GM12878 (cell line): ENCODE measurements at regions of chr2 and their contacts with region 1.

Region 1: DNA sequence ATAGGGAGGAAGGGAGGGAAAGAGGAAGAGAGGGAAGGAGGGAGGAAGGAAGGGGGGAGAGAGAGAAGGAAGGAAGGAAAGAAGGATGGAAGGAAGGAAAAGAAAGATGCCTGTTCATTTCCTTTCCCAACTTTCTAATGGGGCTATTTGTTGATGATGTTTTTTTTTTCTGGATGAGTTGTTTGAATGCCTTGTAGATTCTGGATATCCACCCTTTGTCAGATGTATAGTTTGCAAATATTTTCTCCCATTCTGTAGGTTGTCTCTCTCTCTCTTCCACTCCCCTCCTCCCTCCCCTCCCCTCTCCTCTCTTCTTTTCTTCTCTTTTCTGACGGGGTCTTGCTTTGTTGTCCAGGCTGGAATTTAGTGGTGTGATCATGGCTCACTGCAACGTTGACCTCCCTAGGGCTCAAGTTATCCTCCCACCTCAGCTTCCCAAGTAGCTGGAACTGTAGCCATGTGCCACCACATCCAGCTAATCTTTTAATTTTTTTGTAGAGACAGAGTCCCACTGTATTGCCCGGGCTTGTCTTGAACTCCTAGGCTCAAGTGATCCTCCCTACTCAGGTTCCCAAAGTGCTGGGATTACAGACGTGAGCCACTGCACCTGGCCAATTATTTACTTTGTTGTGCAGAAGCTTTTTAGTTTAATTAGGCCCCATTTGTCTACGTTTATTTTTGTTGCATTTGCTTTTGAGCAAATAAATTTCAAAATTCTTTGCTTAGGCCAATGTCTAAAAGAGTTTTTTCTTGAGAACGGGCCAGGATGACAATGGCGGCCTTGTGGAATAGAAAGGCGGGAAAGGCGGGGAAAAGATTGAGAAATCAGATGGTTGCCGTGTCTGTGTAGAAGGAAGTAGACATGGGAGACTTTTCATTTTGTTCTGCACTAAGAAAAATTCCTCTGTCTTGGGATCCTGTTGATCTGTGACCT is 57.3 kb upstream of the FAM117B start:
- DNase-seq: no peak
- ATAC-seq: no peak
- H3K4me3 ChIP-seq: no peak overlapping the region
- H3K27ac ChIP-seq: no peak overlapping the region
- H3K4me1 ChIP-seq: no peaks in the 10 kb centered on the region
- H3K27me3 ChIP-seq: no peaks in the 10 kb centered on the region
- CTCF ChIP-seq: no peak
- EP300 ChIP-seq: no peak
- POLR2A ChIP-seq: no peak
- RAD21 ChIP-seq: no peak

Region 2: DNA sequence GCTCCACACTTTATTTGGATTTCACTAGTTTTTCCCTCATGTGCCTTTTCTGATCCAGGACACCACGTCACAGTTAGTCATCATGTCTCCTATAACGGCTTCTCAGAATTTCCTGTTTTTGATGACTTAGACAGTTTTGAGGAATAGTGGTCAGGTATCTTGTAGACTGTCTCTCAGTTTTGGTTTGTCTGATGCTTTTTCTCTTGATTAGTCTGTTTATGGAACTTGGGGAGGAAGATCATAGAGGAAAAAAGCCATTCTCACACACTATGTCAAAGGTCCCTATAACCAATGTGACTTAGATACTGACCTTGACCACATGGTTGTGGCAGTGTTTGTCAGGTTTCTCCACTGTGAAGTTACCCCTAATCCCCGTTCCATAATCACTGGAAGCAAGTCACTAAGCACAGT is 868.6 kb after region 1 on chr2:
- CTCF ChIA-PET with region 1: no interaction called
- POLR2A ChIA-PET with region 1: no interaction called
- RAD21 ChIA-PET with region 1: no interaction called
- SMC1A ChIA-PET with region 1: no interaction called
- in situ Hi-C with region 1: loop called (anchors 10 kb)
- intact Hi-C with region 1: no loop called
- DNase-seq: no peak
- ATAC-seq: no peak
- H3K4me3 ChIP-seq: no peak overlapping the region
- H3K27ac ChIP-seq: no peak overlapping the region
- H3K4me1 ChIP-seq: no peaks in the 10 kb centered on the region
- H3K27me3 ChIP-seq: no peaks in the 10 kb centered on the region
- CTCF ChIP-seq: no peak
- EP300 ChIP-seq: no peak
- POLR2A ChIP-seq: no peak
- RAD21 ChIP-seq: no peak

Region 3: DNA sequence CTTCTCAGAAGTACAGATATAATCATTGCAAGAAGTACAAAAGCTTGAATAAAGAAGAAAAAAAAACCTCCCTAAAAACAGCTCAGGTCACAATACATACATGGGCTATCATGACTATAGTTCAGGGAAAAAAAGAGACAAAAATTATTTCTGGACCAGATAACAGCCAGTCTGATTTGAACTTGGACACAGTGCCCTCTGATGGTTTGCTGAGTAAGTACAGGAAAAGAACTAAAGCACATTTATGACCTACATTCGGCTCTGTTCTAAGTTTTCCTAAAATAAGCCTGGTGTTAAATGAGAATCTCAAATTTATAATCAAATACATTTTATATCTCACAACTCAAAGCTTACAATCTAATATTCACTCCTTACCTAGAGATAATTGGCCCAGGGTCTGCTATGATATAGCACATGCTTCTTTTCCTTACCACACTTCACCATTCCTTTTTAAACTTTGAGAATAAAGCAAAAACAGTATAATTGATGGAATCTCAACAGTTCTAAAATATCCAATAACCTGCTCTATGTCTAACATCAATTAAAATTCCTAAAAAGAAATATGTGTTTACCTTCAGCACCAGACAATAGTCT is 876.4 kb after region 1 on chr2:
- CTCF ChIA-PET with region 1: interaction called, 4 read pairs
- POLR2A ChIA-PET with region 1: interaction called, 8 read pairs
- RAD21 ChIA-PET with region 1: interaction called, 5 read pairs
- SMC1A ChIA-PET with region 1: interaction called, 3 read pairs
- in situ Hi-C with region 1: loop called (anchors 10 kb)
- intact Hi-C with region 1: loop called (anchors 2 kb)
- DNase-seq: peak; percentile 4
- ATAC-seq: peak; percentile 86
- H3K4me3 ChIP-seq: no peak overlapping the region
- H3K27ac ChIP-seq: no peak overlapping the region
- H3K4me1 ChIP-seq: no peaks in the 10 kb centered on the region
- H3K27me3 ChIP-seq: no peaks in the 10 kb centered on the region
- CTCF ChIP-seq: peak; percentile 67 to 80 (median 73); a peak in 5 of 6 replicates
- EP300 ChIP-seq: no peak
- POLR2A ChIP-seq: no peak
- RAD21 ChIP-seq: peak; percentile 89

Region 4: GRCh38 chr2:203814661-203815540 is 1237.4 kb after region 1 on chr2:
- CTCF ChIA-PET with region 1: no interaction called
- POLR2A ChIA-PET with region 1: no interaction called
- RAD21 ChIA-PET with region 1: no interaction called
- SMC1A ChIA-PET with region 1: no interaction called
- in situ Hi-C with region 1: loop called (anchors 25 kb)
- intact Hi-C with region 1: loop called (anchors 5 kb)
- DNase-seq: no peak
- ATAC-seq: peak; percentile 91
- H3K4me3 ChIP-seq: no peak overlapping the region
- H3K27ac ChIP-seq: no peak overlapping the region
- H3K4me1 ChIP-seq: peaks cover 6% of the 10 kb centered on the region
- H3K27me3 ChIP-seq: peaks cover 0 to under 1% of the 10 kb centered on the region in 2 experiments; a peak in 1 of 4 replicates
- CTCF ChIP-seq: peak; percentile 55 to 80 (median 66); a peak in 5 of 6 replicates
- EP300 ChIP-seq: no peak
- POLR2A ChIP-seq: no peak
- RAD21 ChIP-seq: peak; percentile 89